PC-9 (cell line): ENCODE measurements at regions of chr6 and their contacts with region 1.

Region 1: GRCh38 chr6:44084231-44085014 is 42.8 kb downstream of the MRPL14 start:
- DNase-seq: no peak
- H3K4me3 ChIP-seq: no peak overlapping the region
- H3K27ac ChIP-seq: no peak overlapping the region
- H3K4me1 ChIP-seq: peaks cover 14% of the 10 kb centered on the region
- H3K27me3 ChIP-seq: no peaks in the 10 kb centered on the region
- CTCF ChIP-seq: no peak

Region 2: DNA sequence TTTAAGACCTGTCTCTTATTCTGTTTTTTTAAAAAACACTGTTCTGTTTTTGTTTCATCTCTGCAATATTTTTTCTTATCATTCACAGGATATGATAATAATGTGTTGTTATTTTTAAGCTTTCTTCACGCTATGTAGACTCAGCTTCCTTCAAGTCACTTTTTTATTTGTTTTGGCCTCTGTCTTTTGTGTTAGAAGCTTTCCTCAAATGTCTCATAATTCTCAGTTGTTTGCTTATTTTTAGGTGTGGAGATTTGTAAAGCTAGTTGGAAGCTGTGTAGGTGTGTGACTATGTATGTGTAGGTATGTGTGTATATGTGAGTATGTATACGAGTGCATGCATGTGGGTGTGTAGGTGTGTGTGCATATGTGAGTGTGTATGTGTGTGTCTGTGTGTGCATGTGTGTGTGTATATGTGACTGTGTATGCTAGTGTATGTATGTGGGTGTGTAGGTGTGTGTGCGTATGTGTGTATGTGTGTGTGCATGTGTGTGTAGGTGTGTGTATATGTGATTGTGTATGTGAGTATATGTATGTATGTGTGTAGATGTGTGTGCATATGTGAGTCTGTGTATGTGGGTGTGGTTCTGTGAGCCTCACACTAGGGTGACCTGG is 330.7 kb before region 1 on chr6:
- CTCF ChIA-PET with region 1: no interaction called
- POLR2A ChIA-PET with region 1: interaction called, 26 read pairs
- intact Hi-C with region 1: no loop called
- DNase-seq: no peak
- H3K4me3 ChIP-seq: no peak overlapping the region
- H3K27ac ChIP-seq: no peak overlapping the region
- H3K4me1 ChIP-seq: no peaks in the 10 kb centered on the region
- H3K27me3 ChIP-seq: no peaks in the 10 kb centered on the region
- CTCF ChIP-seq: no peak

Region 3: DNA sequence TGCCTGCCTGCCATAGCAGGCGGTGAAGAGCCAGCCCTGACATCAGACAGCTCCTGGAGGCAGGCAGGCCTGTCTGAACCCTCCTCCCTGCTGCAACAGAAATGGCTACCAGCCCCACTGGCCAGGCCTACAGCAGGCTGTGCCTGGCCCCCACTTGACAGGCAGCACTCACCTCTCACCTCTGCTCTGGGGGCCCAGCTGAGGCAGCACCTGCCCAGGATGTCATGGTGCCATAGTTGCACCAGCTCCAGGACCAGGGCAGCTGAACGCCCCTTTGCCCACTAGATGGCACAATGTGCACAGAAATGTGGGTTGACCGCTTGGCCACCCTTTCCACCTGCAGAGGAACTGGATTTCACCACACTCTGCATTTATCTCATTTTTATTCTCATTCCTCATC is 12.2 kb after region 1 on chr6:
- CTCF ChIA-PET with region 1: no interaction called
- POLR2A ChIA-PET with region 1: no interaction called
- intact Hi-C with region 1: no loop called
- DNase-seq: peak; percentile 55 to 73
- H3K4me3 ChIP-seq: no peak overlapping the region
- H3K27ac ChIP-seq: no peak overlapping the region
- H3K4me1 ChIP-seq: no peaks in the 10 kb centered on the region
- H3K27me3 ChIP-seq: no peaks in the 10 kb centered on the region
- CTCF ChIP-seq: peak; percentile 80